GM12878 (cell line): ENCODE measurements at regions of chr6 and their contacts with region 1.

Region 1: DNA sequence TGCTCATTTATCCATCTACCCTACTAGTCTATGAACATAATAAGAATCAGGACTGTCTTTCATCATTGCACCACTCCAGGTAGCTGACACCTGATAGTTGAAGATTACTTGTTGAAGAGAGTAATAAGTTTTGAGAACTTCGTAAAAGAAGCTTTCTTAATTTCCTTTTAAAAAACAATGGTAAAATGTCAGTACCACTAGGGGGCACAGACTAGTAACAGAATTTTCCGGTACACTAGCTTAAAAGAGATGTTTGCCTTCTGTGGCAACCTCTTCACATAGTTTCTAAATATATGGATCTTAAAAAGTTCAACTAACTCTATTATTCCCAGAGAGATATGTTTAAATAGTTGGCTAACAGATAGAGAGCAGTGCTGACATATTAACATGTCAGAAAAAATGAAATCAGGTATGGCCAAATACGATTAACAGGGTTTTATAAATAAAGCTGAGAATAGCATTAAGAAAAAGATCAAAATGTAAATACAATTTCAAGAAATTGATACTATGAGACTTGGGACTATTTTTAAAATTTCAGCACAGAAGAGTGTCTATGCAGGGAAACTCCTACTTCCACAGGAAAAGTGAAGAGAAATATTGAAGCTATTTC is 5.4 kb upstream of the KCNQ5 start:
- DNase-seq: no peak
- ATAC-seq: no peak
- H3K4me3 ChIP-seq: no peak overlapping the region
- H3K27ac ChIP-seq: no peak overlapping the region
- H3K4me1 ChIP-seq: peaks cover 13% of the 10 kb centered on the region
- H3K27me3 ChIP-seq: no peaks in the 10 kb centered on the region
- CTCF ChIP-seq: peak; percentile 57 to 70 (median 60); a peak in 5 of 6 replicates
- EP300 ChIP-seq: no peak
- POLR2A ChIP-seq: no peak
- RAD21 ChIP-seq: peak; percentile 81

Region 2: DNA sequence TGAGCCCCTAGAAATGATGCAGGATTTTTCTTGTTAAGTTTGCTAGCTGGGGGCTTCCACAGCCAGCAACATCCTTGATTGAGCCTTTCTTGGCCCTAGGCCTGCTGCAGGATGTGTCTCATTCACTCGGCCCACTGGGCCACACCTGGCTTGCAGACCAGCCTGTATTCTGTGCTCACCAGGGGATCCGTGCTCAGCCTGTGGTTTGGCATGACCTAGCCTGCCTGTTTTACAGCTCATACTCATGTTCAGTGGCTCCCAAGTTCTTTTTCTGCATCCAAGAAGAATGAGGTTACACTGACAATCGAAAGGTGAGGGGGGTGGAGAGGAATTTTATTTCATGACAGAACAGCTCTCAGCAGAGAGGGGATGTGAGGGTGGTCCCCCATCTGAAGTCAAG is 466.8 kb before region 1 on chr6:
- CTCF ChIA-PET with region 1: no interaction called
- POLR2A ChIA-PET with region 1: no interaction called
- RAD21 ChIA-PET with region 1: no interaction called
- SMC1A ChIA-PET with region 1: no interaction called
- in situ Hi-C with region 1: no loop called
- intact Hi-C with region 1: no loop called
- DNase-seq: no peak
- ATAC-seq: no peak
- H3K4me3 ChIP-seq: no peak overlapping the region
- H3K27ac ChIP-seq: no peak overlapping the region
- H3K4me1 ChIP-seq: no peaks in the 10 kb centered on the region
- H3K27me3 ChIP-seq: no peaks in the 10 kb centered on the region
- CTCF ChIP-seq: no peak
- EP300 ChIP-seq: no peak
- POLR2A ChIP-seq: no peak
- RAD21 ChIP-seq: no peak

Region 3: DNA sequence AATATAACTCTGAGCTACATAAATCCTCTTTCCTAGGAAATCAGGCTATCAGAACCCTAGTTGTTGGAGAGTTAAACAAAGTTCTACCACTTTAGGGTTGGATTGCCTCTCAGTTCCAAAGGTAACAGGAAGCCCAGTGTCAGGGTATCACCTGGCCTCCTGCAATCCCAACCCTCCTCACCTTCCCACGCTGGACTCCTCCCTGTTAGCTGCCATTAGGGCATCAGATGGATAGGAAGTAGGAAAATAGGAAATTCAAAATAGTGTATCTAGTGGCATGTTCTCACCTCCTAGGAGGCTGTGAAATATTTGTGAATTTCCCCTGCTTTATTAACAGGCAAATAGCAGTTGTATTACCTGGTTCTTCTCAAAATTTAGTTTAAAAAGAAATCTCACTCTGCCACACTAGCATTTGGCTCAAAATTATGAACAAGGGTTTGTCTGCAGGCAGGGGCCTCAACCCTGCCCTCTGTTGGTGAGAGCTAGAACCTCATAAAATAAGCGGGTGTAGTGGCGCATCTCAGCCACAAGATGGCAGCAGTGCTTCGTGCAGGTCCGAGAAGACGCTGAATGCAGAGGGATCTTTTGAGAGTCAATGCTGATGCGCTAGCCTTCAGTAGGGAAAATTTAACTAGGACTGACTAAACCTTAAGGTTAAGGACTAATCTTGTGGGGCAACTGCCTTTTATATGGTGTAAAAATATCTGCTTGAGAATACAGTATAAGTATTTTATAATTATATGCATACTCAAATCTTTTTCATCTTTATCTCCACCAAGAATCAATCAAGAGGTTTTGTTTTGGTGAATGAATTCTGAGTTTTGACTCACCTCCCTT is 204.4 kb before region 1 on chr6:
- CTCF ChIA-PET with region 1: interaction called, 55 read pairs
- POLR2A ChIA-PET with region 1: no interaction called
- RAD21 ChIA-PET with region 1: interaction called, 11 read pairs
- SMC1A ChIA-PET with region 1: interaction called, 27 read pairs
- in situ Hi-C with region 1: no loop called
- intact Hi-C with region 1: loop called (anchors 2 kb)
- DNase-seq: peak; percentile 59
- ATAC-seq: peak; percentile 87
- H3K4me3 ChIP-seq: no peak overlapping the region
- H3K27ac ChIP-seq: no peak overlapping the region
- H3K4me1 ChIP-seq: no peaks in the 10 kb centered on the region
- H3K27me3 ChIP-seq: peaks cover 1 to 3% of the 10 kb centered on the region in 2 experiments; a peak in 2 of 4 replicates
- CTCF ChIP-seq: peak; percentile 100; a peak in 5 of 6 replicates
- EP300 ChIP-seq: no peak
- POLR2A ChIP-seq: no peak
- RAD21 ChIP-seq: peak; percentile 98

Region 4: GRCh38 chr6:72643214-72643613 is 26.7 kb after region 1 on chr6:
- CTCF ChIA-PET with region 1: interaction called, 53 read pairs
- POLR2A ChIA-PET with region 1: interaction called, 5 read pairs
- RAD21 ChIA-PET with region 1: interaction called, 172 read pairs
- SMC1A ChIA-PET with region 1: interaction called, 108 read pairs
- in situ Hi-C with region 1: no loop called
- intact Hi-C with region 1: no loop called
- DNase-seq: no peak
- ATAC-seq: peak; percentile 30; the same call in 1 of the 3 replicates
- H3K4me3 ChIP-seq: no peak overlapping the region
- H3K27ac ChIP-seq: no peak overlapping the region
- H3K4me1 ChIP-seq: peaks cover 4% of the 10 kb centered on the region; the same call in 1 of the 2 replicates
- H3K27me3 ChIP-seq: no peaks in the 10 kb centered on the region
- CTCF ChIP-seq: peak in 2 of 3 experiments; percentile 13 to 50; a peak in 3 of 6 replicates
- EP300 ChIP-seq: no peak
- POLR2A ChIP-seq: no peak
- RAD21 ChIP-seq: peak; percentile 57

Region 5: DNA sequence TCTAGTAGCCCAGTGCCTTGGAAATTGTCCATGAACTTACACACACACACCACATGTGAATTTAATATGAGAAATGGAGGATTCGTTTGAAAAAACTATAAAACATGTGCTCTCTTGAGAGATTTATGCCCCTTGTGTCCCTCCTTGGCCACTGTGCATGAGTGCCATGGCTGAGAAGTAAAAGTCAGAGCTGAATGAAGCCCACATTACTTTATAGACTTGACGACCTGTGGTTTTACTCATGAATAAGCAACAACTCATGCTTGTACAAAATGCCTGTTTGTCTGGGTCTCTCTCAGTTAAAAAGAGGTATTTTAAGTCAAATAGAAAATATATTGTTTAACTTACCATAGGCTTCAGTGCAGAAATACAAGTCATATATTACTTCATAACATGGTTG is 108.0 kb after region 1 on chr6:
- CTCF ChIA-PET with region 1: interaction called, 4 read pairs
- POLR2A ChIA-PET with region 1: no interaction called
- RAD21 ChIA-PET with region 1: interaction called, 12 read pairs
- SMC1A ChIA-PET with region 1: interaction called, 12 read pairs
- in situ Hi-C with region 1: no loop called
- intact Hi-C with region 1: no loop called
- DNase-seq: peak; percentile 58
- ATAC-seq: peak; percentile 99
- H3K4me3 ChIP-seq: no peak overlapping the region
- H3K27ac ChIP-seq: no peak overlapping the region
- H3K4me1 ChIP-seq: peaks cover 2% of the 10 kb centered on the region; the same call in 1 of the 2 replicates
- H3K27me3 ChIP-seq: no peaks in the 10 kb centered on the region
- CTCF ChIP-seq: no peak
- EP300 ChIP-seq: peak in 1 of 2 experiments; percentile 55; a peak in 2 of 4 replicates
- POLR2A ChIP-seq: no peak
- RAD21 ChIP-seq: no peak

Region 6: GRCh38 chr6:73085443-73085871 is 468.9 kb after region 1 on chr6:
- CTCF ChIA-PET with region 1: interaction called, 14 read pairs
- POLR2A ChIA-PET with region 1: no interaction called
- RAD21 ChIA-PET with region 1: interaction called, 13 read pairs
- SMC1A ChIA-PET with region 1: interaction called, 14 read pairs
- in situ Hi-C with region 1: no loop called
- intact Hi-C with region 1: no loop called
- DNase-seq: peak; percentile 36
- ATAC-seq: peak; percentile 80
- H3K4me3 ChIP-seq: no peak overlapping the region
- H3K27ac ChIP-seq: no peak overlapping the region
- H3K4me1 ChIP-seq: peaks cover 6% of the 10 kb centered on the region
- H3K27me3 ChIP-seq: no peaks in the 10 kb centered on the region
- CTCF ChIP-seq: no peak
- EP300 ChIP-seq: 0 out of 4 replicates have a peak, but pooled peaks of 1 of the 2 experiments have one; percentile 31
- POLR2A ChIP-seq: no peak
- RAD21 ChIP-seq: no peak

Region 7: DNA sequence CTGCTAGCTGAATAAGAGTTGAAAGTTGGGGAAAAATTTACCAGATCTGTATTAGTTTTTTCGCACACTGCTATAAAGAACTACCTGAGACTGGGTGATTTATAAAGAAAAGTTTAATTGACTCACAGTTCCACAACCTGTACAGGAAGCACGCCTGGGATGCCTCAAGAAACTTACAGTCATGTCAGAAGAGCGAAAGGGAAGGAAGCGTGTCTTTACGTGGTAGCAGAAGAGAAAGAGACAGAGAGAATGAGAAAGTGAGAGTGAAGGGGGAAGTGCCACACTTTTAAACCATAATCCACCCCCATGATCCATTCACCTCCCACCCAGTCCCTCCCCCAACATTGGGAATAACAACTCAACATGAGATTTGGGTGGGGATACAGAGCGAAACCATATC is 529.2 kb after region 1 on chr6:
- CTCF ChIA-PET with region 1: interaction called, 10 read pairs
- POLR2A ChIA-PET with region 1: no interaction called
- RAD21 ChIA-PET with region 1: interaction called, 5 read pairs
- SMC1A ChIA-PET with region 1: interaction called, 4 read pairs
- in situ Hi-C with region 1: no loop called
- intact Hi-C with region 1: no loop called
- DNase-seq: no peak
- ATAC-seq: peak; percentile 59
- H3K4me3 ChIP-seq: no peak overlapping the region
- H3K27ac ChIP-seq: no peak overlapping the region
- H3K4me1 ChIP-seq: peaks cover 9% of the 10 kb centered on the region
- H3K27me3 ChIP-seq: no peaks in the 10 kb centered on the region
- CTCF ChIP-seq: no peak
- EP300 ChIP-seq: no peak
- POLR2A ChIP-seq: no peak
- RAD21 ChIP-seq: no peak